Dendritic cell treated with granulocyte-macrophage colony-stimulating factor and Interleukin-4, amounts not matched to agents 40 ng/mL and 50 ng/mL, for 4 days (primary cell): ENCODE measurements at regions of chr14 and their contacts with region 1.

Region 1: DNA sequence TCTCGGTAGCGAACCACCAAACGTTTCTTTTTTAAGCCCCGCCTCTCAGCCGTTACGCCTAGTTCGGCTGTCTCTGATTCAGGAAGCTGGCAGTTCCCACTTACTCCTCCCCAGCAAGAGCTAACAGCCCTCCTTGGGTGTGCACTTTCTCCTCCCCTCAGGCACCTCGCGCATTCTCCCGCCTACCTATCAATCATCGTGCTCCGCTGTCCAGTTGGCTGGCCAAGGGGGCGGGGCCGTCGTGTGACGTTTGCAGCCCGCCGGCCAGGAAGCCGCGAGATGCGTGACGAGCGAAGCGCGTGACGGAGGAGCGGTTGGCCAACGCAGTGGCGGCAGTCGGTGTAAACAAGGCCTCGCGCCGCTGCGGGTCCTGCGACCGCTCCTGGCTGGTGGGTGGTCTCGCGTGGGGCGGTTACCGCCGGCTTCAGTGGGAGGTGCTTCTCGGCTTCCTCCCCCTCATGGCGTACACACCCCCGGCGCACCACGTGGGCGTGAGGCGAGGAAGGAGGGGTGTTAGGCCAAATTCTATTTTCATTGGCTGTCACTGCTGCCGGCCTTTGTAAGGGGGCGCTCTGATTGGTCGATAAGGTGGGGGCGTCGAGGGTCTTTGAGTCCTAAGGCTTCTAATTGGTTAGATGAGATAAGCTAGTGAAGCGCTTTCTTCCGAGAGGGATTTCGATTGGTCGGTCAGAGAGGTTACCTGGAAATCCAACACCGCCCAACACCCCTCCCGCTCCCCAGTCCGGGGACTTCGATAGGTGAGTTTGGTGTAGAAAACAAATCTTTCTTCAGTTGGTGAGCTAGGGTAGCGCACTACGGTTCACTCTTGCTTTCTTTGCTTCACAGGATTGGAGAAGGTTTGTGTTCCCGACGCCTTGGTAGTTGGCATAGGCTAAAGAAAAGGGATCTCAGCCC is at the starts of genes DCAF11 and NRL:
- H3K4me3 Mint-ChIP-seq: peak within 1 kb of the TSS; percentile 88
- H3K27ac Mint-ChIP-seq: peak within 1 kb of the TSS; percentile 100
- H3K4me1 Mint-ChIP-seq: peaks cover 41% of the 10 kb centered on the region
- H3K27me3 Mint-ChIP-seq: no peaks in the 10 kb centered on the region

Region 2: DNA sequence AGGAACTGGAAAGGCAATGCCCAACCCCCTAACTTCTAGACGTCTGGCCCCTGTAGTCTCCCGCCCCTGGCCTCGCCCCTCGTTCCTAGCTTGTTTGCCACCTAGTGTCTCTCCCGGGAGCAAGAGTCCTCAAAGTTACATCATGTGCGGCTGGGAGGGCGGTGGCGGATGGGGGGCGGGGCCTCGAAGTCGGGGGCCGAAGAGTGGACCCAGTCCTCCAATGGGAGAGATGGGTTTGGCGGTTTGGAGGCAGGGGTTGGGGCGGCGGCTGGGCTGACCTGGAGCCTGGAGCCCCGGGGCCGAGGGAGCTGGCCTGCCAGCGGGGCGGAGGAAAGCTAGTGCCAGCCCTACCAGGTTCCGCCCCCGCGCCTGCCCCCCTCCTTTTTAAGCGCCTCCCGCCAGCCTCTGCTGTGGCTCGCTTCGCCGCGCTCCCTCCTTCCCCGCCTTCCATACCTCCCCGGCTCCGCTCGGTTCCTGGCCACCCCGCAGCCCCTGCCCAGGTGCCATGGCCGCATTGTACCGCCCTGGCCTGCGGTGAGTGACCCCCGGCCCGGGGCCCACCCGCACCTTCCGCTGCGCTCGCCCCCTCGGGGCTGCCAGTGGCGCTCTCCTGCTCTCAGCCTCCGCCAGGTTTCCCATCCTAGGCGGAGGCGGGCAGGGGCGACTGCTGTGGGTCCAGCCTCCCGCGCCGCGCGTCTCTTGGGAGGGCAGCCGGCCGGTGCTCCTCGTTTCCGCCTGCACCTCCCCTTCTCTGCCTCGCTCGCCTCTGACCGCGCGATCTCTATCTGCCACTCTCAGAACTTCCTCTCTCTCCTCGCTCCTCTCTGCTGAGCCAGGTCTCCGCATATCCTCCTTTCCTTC is 20.7 kb before region 1 on chr14 and contains the start of gene PCK2:
- intact Hi-C with region 1: loop called (anchors 1 kb)
- H3K4me3 Mint-ChIP-seq: peak within 1 kb of the TSS; percentile 90
- H3K27ac Mint-ChIP-seq: peak within 1 kb of the TSS; percentile 88
- H3K4me1 Mint-ChIP-seq: peaks cover 63% of the 10 kb centered on the region
- H3K27me3 Mint-ChIP-seq: no peaks in the 10 kb centered on the region

Region 3: GRCh38 chr14:24141097-24141880 is 26.5 kb after region 1 on chr14 and contains the start of gene EMC9:
- intact Hi-C with region 1: loop called (anchors 1 kb)
- H3K4me3 Mint-ChIP-seq: peak within 1 kb of the TSS; percentile 95
- H3K27ac Mint-ChIP-seq: peak within 1 kb of the TSS; percentile 86
- H3K4me1 Mint-ChIP-seq: peaks cover 82% of the 10 kb centered on the region
- H3K27me3 Mint-ChIP-seq: no peaks in the 10 kb centered on the region

Region 4: DNA sequence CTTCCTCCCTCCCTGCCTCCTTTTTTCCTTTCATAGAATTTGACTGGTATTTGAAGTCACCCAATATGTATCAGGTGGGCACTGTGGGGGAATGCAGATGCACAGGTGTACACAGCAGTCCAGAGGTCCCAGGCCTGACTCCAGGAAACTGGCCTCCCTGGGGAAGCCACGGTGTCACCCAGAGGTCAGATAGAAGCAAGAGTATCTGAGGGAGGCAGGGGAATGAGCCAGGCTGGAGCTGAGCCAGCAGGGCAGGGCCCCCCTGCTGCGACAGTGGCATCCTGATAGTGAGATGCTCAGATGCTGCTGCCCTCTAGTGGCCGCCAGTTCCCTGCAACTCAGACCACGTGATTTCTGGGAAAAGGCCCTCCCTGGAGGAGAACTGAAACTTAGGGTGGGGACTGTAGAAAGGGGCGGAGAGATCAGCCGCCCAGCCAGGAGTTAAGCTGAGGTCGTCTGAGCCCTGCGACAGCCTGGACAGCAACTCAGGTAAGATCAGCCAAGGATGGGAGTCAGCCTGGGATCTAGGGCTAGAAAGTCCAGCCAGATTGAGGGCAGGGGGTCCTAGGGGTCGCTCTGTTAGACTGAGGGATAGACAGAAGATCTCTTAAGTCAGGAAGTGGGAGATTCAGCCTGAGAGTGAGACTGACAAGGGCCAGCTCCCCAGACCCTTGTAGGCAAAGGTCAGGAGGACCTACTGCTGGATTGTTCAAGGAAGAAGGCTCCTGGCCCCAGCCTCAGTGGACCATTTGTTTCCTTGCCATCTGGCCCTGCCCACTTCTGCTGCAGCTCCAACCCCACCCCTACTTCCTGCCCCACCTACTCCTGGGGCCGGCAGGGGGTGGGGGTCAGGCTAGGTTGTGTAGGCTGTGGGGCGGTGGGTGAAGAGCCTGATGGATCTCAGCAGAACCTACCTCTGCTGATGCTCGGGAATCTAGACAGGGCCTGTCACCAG is 46.3 kb after region 1 on chr14 and contains the start of gene IRF9:
- intact Hi-C with region 1: loop called (anchors 1 kb)
- H3K4me3 Mint-ChIP-seq: peak within 1 kb of the TSS; percentile 95
- H3K27ac Mint-ChIP-seq: peak within 1 kb of the TSS; percentile 93
- H3K4me1 Mint-ChIP-seq: peaks cover 66% of the 10 kb centered on the region
- H3K27me3 Mint-ChIP-seq: no peaks in the 10 kb centered on the region

Region 5: DNA sequence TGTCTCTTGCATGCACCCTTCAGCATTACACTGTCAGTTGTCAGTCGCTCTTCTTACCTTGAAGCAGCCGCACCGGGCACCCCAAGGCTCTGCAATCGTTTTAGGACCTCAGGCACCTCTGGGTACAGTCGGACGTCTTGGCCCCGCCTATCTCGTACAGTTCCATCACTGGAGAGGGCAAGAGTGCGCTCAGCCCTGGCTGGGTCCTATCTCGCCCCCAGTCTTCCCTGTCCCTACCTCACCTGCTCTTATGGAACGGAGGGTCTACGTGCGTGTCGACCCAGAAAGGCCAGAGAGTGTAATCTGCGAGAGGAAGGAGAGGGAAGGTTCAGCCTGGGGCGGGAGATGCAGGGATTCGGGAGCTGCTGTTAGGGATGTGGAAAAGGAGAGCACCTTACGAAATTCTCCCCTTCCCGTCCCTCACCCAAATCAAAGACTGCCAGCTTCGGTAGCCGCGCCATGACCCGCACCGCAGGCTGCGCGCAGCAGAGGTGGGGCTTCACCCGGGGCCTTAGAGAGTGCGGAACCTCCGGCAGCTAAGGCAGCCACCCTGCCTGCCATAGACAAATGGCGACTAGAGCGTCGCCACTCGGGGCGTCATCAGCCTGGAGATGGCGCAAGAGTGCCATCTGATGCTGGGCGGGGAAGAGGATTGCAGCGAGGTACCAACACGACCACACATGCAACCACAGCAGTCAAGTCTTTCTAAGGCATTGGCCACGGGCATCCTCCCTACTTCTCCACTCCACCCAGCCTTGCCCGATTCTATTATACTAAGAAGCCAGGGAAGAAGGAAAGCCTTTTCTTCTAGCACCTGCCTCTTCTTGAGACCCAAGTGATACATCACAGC is 100.9 kb after region 1 on chr14 and contains the start of gene MDP1:
- intact Hi-C with region 1: loop called (anchors 10 kb)
- H3K4me3 Mint-ChIP-seq: peak within 1 kb of the TSS; percentile 90
- H3K27ac Mint-ChIP-seq: peak within 1 kb of the TSS; percentile 99
- H3K4me1 Mint-ChIP-seq: peaks cover 41% of the 10 kb centered on the region
- H3K27me3 Mint-ChIP-seq: no peaks in the 10 kb centered on the region

Region 6: GRCh38 chr14:24289649-24290249 is 175.0 kb after region 1 on chr14:
- intact Hi-C with region 1: no loop called
- H3K4me3 Mint-ChIP-seq: no peak overlapping the region
- H3K27ac Mint-ChIP-seq: no peak overlapping the region
- H3K4me1 Mint-ChIP-seq: peaks cover 11% of the 10 kb centered on the region
- H3K27me3 Mint-ChIP-seq: no peaks in the 10 kb centered on the region